ENCODE measurements at regions of chr12 and their contacts with region 1.

Region 1: GRCh38 chr12:4276524-4277204 is 3.1 kb downstream of the CCND2 start:
- DNase-seq: peak; percentile 84
- H3K4me3 ChIP-seq: no peak overlapping the region; a peak in 1 of 4 replicates
- H3K27ac ChIP-seq: no peak overlapping the region
- H3K4me1 ChIP-seq: peaks cover 0 to 4% of the 10 kb centered on the region in 2 experiments; a peak in 2 of 4 replicates
- H3K27me3 ChIP-seq: peaks cover 97% of the 10 kb centered on the region
- CTCF ChIP-seq: peak; percentile 91
- EP300 ChIP-seq: no peak
- RAD21 ChIP-seq: peak; percentile 89

Region 2: GRCh38 chr12:3896801-3897331 is 379.8 kb before region 1 on chr12:
- CTCF ChIA-PET with region 1: interaction called, 31 read pairs
- POLR2A ChIA-PET with region 1: no interaction called
- DNase-seq: no peak
- H3K4me3 ChIP-seq: no peak overlapping the region
- H3K27ac ChIP-seq: no peak overlapping the region
- H3K4me1 ChIP-seq: no peaks in the 10 kb centered on the region
- H3K27me3 ChIP-seq: peaks cover 54% of the 10 kb centered on the region
- CTCF ChIP-seq: no peak
- EP300 ChIP-seq: no peak
- RAD21 ChIP-seq: no peak

Region 3: GRCh38 chr12:3988519-3989448 is 287.9 kb before region 1 on chr12:
- CTCF ChIA-PET with region 1: interaction called, 35 read pairs
- POLR2A ChIA-PET with region 1: no interaction called
- DNase-seq: no peak
- H3K4me3 ChIP-seq: no peak overlapping the region
- H3K27ac ChIP-seq: no peak overlapping the region
- H3K4me1 ChIP-seq: no peaks in the 10 kb centered on the region
- H3K27me3 ChIP-seq: peaks cover 48% of the 10 kb centered on the region
- CTCF ChIP-seq: no peak
- EP300 ChIP-seq: no peak
- RAD21 ChIP-seq: no peak

Region 4: GRCh38 chr12:4037747-4038312 is 238.8 kb before region 1 on chr12:
- CTCF ChIA-PET with region 1: interaction called, 21 read pairs
- POLR2A ChIA-PET with region 1: no interaction called
- DNase-seq: peak; percentile 27
- H3K4me3 ChIP-seq: no peak overlapping the region
- H3K27ac ChIP-seq: no peak overlapping the region
- H3K4me1 ChIP-seq: no peaks in the 10 kb centered on the region
- H3K27me3 ChIP-seq: peaks cover 67% of the 10 kb centered on the region; the same call in 1 of the 2 replicates
- CTCF ChIP-seq: peak; percentile 77
- EP300 ChIP-seq: no peak
- RAD21 ChIP-seq: peak; percentile 61

Region 5: DNA sequence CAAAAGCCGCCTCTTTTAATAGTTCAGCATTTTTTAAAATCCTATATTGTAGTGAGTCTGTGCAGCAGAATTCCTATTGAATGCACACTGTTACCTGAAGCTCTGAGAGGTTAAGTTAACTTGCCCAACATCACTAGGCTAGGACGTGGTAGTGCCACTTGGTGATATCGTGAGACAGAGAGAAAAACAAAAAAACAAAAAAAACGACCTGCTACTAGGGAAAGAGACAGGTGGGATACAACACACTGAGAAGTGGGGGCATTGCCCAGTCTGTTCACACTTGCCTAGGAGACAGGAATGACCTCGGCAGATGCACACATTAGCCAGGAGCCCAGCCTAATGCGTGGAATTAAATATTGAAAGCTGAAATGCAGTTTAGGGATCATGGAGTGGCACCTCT is 132.8 kb before region 1 on chr12:
- CTCF ChIA-PET with region 1: interaction called, 10 read pairs
- POLR2A ChIA-PET with region 1: no interaction called
- DNase-seq: no peak
- H3K4me3 ChIP-seq: no peak overlapping the region
- H3K27ac ChIP-seq: no peak overlapping the region
- H3K4me1 ChIP-seq: no peaks in the 10 kb centered on the region
- H3K27me3 ChIP-seq: peaks cover 28% of the 10 kb centered on the region; the same call in 1 of the 2 replicates
- CTCF ChIP-seq: no peak
- EP300 ChIP-seq: no peak
- RAD21 ChIP-seq: no peak

Region 6: DNA sequence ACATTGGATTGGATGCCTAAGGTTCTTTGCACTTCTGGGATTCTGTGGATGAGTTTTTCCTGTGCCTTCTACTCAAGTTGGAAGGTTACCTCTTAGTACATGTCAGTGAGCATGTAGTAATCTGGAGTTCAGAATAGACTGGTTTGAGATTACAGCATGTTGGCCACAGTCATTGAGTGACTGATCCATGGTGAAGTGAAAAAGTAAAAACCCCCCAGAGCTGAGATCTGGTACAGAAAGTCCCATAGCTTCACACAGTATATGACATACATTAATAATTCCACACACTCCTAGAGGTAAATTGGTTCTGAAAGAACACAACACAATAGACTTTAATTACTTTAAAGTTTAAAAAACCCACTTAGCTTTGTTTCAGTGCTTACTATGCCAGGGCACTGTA is 15.0 kb before region 1 on chr12:
- CTCF ChIA-PET with region 1: interaction called, 44 read pairs
- POLR2A ChIA-PET with region 1: no interaction called
- DNase-seq: no peak
- H3K4me3 ChIP-seq: no peak overlapping the region
- H3K27ac ChIP-seq: no peak overlapping the region
- H3K4me1 ChIP-seq: no peaks in the 10 kb centered on the region
- H3K27me3 ChIP-seq: peaks cover 44% of the 10 kb centered on the region
- CTCF ChIP-seq: no peak
- EP300 ChIP-seq: no peak
- RAD21 ChIP-seq: no peak

Region 7: GRCh38 chr12:4307593-4308333 is 31.1 kb after region 1 on chr12:
- CTCF ChIA-PET with region 1: interaction called, 11 read pairs
- POLR2A ChIA-PET with region 1: no interaction called
- DNase-seq: peak; percentile 84
- H3K4me3 ChIP-seq: peak overlapping the region; percentile 27 to 32; a peak in 2 of 4 replicates
- H3K27ac ChIP-seq: no peak overlapping the region
- H3K4me1 ChIP-seq: peaks cover 0 to 5% of the 10 kb centered on the region in 2 experiments; a peak in 1 of 4 replicates
- H3K27me3 ChIP-seq: peaks cover 54% of the 10 kb centered on the region
- CTCF ChIP-seq: peak; percentile 66
- EP300 ChIP-seq: no peak
- RAD21 ChIP-seq: peak; percentile 87